GM10248 (cell line): ENCODE measurements at regions of chr7 and their contacts with region 1.

Region 1: DNA sequence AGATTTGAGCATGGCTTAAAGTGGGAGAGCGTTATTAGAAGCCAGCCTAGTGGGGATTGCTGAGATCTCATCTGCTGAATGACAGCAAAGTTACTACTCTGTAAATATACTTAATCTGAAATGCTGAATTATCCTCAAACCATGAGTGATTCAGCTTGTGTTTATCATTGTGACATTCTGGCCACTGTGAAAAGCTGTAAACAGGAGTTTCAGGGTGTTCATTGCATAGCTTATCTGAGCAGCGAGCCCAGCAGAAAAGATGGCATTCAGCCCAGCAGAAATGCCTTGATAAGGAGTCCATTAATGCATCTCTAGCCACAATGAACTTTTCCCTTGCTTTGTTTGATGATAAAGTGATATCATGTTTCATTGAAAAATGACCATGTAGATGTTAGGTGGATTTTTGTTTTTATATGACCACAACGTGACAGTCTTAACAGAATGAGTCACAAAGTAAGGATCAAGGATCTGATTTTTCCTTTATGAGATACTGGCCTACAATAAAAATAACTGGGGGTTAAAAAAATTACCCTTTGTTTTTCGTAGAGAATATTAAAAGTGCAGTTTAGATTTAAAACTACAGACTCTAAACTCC is 7.8 kb downstream of the TES start:
- DNase-seq: no peak
- CTCF ChIP-seq: no peak

Region 2: DNA sequence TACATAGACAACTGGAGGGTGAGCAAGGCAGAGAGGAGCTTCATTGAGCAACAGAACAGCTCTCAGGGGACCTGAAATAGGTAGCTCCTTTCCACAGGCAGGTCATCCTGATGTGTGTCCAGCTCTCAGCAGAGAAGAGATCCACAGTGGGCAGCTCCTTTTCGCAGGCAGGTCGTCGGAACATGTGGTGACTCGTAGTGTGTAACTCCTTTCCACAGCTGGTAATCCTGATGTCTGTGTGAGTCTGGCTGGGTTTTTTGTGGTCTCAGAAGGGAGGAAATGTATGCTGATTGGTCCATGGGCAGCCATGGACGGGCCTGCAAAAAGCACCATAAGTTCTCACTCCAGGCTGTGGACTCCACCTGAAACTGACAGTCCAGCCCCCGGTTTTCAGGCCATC is 32.2 kb before region 1 on chr7:
- CTCF ChIA-PET with region 1: no interaction called
- POLR2A ChIA-PET with region 1: no interaction called
- DNase-seq: no peak
- CTCF ChIP-seq: no peak

Region 3: DNA sequence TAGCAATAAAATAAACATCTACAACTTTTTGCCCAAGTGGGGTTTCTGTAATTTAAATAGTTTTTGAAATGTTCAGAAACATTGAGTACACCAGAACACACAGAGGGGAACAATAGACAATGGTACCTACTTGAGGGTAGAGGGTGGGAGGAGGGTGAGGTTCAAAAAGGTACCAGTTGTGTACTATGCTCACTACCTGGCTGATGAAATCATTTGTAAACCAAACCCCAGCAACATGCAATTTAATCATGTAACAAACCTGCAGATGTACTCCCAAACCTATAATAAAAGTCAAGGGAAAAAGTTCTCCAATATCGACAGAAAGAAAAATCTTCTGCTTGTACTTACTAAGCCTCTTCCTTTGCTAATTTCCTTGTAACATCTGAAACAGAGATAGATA is 12.0 kb before region 1 on chr7:
- CTCF ChIA-PET with region 1: interaction called, 13 read pairs
- POLR2A ChIA-PET with region 1: no interaction called
- DNase-seq: no peak
- CTCF ChIP-seq: no peak

Region 4: GRCh38 chr7:116249708-116250553 is 31.8 kb after region 1 on chr7:
- CTCF ChIA-PET with region 1: no interaction called
- POLR2A ChIA-PET with region 1: no interaction called
- DNase-seq: no peak
- CTCF ChIP-seq: peak; percentile 12